ENCODE measurements at regions of chr11 and their contacts with region 1.

Region 1: DNA sequence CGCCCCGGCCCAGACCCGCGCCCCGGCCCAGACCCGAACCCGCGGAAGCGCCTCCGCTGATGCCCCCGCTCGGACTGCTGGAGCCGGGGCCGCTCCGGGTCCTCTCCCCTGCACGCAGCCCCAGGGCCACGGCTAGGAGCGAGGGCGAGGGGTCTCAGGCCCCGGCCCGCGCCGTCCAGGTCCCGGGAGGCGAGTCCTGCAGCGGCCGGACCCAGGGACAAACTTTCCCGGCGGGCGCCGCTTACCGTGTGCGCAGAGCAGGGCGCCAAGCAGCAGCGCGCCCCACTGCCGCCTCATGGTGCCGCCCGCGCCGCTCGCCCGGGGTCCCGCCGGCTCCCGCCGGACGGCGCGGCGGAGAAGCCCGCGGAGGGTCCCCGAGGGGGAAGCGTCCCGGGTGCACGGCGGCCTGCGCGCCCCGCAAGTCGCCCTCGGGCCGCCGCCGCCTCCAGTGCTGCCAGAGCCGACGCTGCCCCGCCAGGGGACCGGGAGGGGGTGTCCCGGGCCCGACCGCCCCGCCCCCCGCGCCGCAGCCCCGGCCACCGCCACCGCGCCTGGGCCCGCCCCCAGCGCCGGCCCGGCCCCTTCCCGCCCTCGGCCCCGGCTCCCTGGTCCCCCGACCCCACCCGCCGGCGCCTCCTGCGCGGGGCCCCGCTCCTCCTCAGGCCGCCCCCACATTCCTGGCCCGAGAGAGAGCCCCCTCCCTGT is at the start of gene LRP4:
- DNase-seq: peak; percentile 62
- ATAC-seq: peak; percentile 57
- H3K4me3 Mint-ChIP-seq: peak within 1 kb of the TSS; percentile 64
- H3K27ac Mint-ChIP-seq: no peak within 1 kb of the TSS
- H3K4me1 Mint-ChIP-seq: peaks cover 25% of the 10 kb centered on the region
- H3K27me3 Mint-ChIP-seq: peaks cover 49% of the 10 kb centered on the region
- total RNA-seq, gene LRP4: 0.02 to 0.18 TPM

Region 2: GRCh38 chr11:46808799-46809431 is 109.3 kb before region 1 on chr11:
- CTCF ChIA-PET with region 1: no interaction called
- POLR2A ChIA-PET with region 1: no interaction called
- intact Hi-C with region 1: no loop called
- DNase-seq: no peak
- ATAC-seq: peak; percentile 44
- H3K4me3 Mint-ChIP-seq: no peak overlapping the region
- H3K27ac Mint-ChIP-seq: no peak overlapping the region
- H3K4me1 Mint-ChIP-seq: peaks cover 5% of the 10 kb centered on the region
- H3K27me3 Mint-ChIP-seq: no peaks in the 10 kb centered on the region

Region 3: GRCh38 chr11:46936138-46937110 is 18.2 kb after region 1 on chr11 and contains the start of gene CSTPP1:
- CTCF ChIA-PET with region 1: interaction called, 9 read pairs
- POLR2A ChIA-PET with region 1: interaction called, 5 read pairs
- intact Hi-C with region 1: loop called in 1 of 2 experiments (anchors 1 kb)
- DNase-seq: peak; percentile 97
- ATAC-seq: peak; percentile 96
- H3K4me3 Mint-ChIP-seq: peak within 1 kb of the TSS; percentile 86
- H3K27ac Mint-ChIP-seq: peak within 1 kb of the TSS; percentile 88
- H3K4me1 Mint-ChIP-seq: peaks cover 16% of the 10 kb centered on the region
- H3K27me3 Mint-ChIP-seq: peaks cover 5% of the 10 kb centered on the region
- total RNA-seq, gene CSTPP1: 17.9 to 18.6 TPM

Measured in activated CD4-positive, alpha-beta T cell treated with anti-CD3 and anti-CD28 coated beads for 36 hours (primary cell).